Activated naive CD4-positive, alpha-beta T cell treated with anti-CD3 and anti-CD28 coated beads for 36 hours (primary cell): ENCODE measurements at regions of chr17 and their contacts with region 1.

Region 1: GRCh38 chr17:2786176-2786881 is 9.9 kb upstream of the RAP1GAP2 start:
- DNase-seq: peak; percentile 97
- H3K4me3 Mint-ChIP-seq: no peak overlapping the region
- H3K27ac Mint-ChIP-seq: no peak overlapping the region
- H3K4me1 Mint-ChIP-seq: peaks cover 6% of the 10 kb centered on the region
- H3K27me3 Mint-ChIP-seq: peaks cover under 1% of the 10 kb centered on the region

Region 2: GRCh38 chr17:2814481-2815341 is 28.4 kb after region 1 on chr17:
- CTCF ChIA-PET with region 1: interaction called, 18 read pairs
- intact Hi-C with region 1: loop called (anchors 2 kb)
- DNase-seq: peak; percentile 94
- H3K4me3 Mint-ChIP-seq: peak overlapping the region; percentile 43
- H3K27ac Mint-ChIP-seq: no peak overlapping the region
- H3K4me1 Mint-ChIP-seq: peaks cover 24% of the 10 kb centered on the region
- H3K27me3 Mint-ChIP-seq: peaks cover 9% of the 10 kb centered on the region

Region 3: DNA sequence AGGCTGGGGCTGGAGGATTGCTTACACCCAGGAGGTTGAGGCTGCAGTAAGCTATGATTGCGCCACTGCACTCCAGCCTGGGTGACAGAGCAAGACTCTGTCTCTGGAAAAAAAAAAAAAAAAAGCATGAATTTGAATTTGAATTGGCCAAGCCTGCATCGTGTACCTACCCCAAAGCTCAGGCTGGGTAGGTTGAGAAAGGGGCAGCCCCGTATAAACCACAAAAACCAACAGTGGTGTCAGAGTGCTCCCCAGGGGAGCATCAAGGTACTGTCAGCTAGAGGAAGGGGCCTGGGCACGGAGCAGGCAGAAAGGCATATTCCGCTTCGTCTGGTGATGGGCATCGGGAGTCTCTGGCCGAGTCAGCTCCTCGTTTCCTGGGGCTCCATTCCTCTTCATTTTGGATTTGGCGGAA is 50.8 kb after region 1 on chr17:
- CTCF ChIA-PET with region 1: interaction called, 20 read pairs
- intact Hi-C with region 1: loop called (anchors 1 kb)
- DNase-seq: peak; percentile 79
- H3K4me3 Mint-ChIP-seq: no peak overlapping the region
- H3K27ac Mint-ChIP-seq: no peak overlapping the region
- H3K4me1 Mint-ChIP-seq: peaks cover 5% of the 10 kb centered on the region
- H3K27me3 Mint-ChIP-seq: no peaks in the 10 kb centered on the region

Region 4: GRCh38 chr17:2929881-2930533 is 143.7 kb after region 1 on chr17:
- CTCF ChIA-PET with region 1: no interaction called
- intact Hi-C with region 1: loop called (anchors 1 kb)
- DNase-seq: peak; percentile 47
- H3K4me3 Mint-ChIP-seq: no peak overlapping the region
- H3K27ac Mint-ChIP-seq: no peak overlapping the region
- H3K4me1 Mint-ChIP-seq: peaks cover 7% of the 10 kb centered on the region
- H3K27me3 Mint-ChIP-seq: no peaks in the 10 kb centered on the region

Region 5: DNA sequence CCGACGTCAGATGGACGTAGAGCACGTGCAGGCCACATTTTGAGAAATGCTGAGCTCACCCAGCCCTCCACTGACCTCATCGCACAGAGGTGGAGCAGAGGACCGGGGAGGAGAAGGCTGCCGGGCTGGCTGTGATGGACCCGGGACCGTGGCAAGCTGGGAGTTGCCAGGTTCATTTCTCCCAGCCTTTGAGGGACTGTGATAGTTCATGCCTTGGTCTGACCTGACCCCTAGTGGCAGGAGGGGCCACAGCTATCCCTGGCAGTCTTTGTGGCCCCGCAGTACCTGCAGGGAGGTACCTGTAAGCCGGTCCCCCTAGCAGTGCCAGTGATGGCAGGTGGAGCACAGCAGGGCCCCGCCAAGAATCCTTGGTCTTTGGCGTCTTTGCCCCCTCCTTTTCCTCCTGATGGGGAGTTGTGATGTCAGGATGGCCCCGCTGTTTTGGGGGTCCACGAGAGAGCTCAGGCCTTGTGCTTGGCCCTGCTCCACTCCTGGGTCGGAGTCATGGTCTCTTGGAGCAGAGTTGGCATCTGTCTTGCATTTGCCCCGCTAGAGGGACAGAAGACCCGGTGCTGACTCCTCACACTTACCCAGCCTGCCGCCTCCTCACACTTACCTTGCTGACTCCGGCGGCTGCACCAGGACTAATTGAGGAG is 226.7 kb after region 1 on chr17:
- CTCF ChIA-PET with region 1: interaction called, 9 read pairs
- intact Hi-C with region 1: loop called (anchors 1 kb)
- DNase-seq: peak; percentile 71
- H3K4me3 Mint-ChIP-seq: no peak overlapping the region
- H3K27ac Mint-ChIP-seq: no peak overlapping the region
- H3K4me1 Mint-ChIP-seq: no peaks in the 10 kb centered on the region
- H3K27me3 Mint-ChIP-seq: no peaks in the 10 kb centered on the region